Endothelial cell of umbilical vein (primary cell): ENCODE measurements at regions of chr3 and their contacts with region 1.

Region 1: GRCh38 chr3:44761424-44762169 is at the starts of genes KIAA1143 and KIF15:
- DNase-seq: peak; percentile 96
- H3K4me3 ChIP-seq: peak within 1 kb of the TSS; percentile 57 to 91 (median 81)
- H3K27ac ChIP-seq: peak within 1 kb of the TSS; percentile 80
- H3K4me1 ChIP-seq: peaks cover 6% of the 10 kb centered on the region
- H3K27me3 ChIP-seq: no peaks in the 10 kb centered on the region
- CTCF ChIP-seq: no peak
- POLR2A ChIP-seq: peak; percentile 74
- total RNA-seq, gene KIAA1143: 25.2 and 28.1 TPM in 2 replicates
- total RNA-seq, gene KIF15: 20.9 and 21.6 TPM in 2 replicates

Region 2: DNA sequence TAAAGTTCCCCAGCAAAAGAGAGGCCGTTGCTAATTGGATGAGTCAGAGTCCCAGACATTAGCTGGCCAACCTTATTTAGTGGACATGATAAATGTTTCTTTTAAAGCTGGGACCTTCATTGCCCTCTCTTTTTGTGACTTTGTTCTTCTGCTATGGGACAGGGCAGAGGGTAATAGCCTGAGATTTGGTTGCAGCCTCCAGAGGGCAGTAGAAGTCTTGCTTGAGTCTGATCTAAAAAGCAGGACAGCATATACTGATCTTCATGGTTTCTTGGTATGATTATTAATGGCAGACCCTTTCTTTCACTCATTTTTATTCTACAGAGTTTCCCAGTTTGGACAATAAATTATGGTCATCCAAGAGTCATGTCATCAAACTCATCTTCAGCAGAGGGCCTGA is 231.7 kb before region 1 on chr3:
- CTCF ChIA-PET with region 1: interaction called, 4 read pairs
- POLR2A ChIA-PET with region 1: no interaction called
- dilution Hi-C with region 1: no loop called
- intact Hi-C with region 1: loop called (anchors 1 kb)
- DNase-seq: peak; percentile 8
- H3K4me3 ChIP-seq: no peak overlapping the region
- H3K27ac ChIP-seq: no peak overlapping the region
- H3K4me1 ChIP-seq: no peaks in the 10 kb centered on the region
- H3K27me3 ChIP-seq: no peaks in the 10 kb centered on the region
- CTCF ChIP-seq: peak; percentile 21 to 23
- POLR2A ChIP-seq: no peak

Region 3: DNA sequence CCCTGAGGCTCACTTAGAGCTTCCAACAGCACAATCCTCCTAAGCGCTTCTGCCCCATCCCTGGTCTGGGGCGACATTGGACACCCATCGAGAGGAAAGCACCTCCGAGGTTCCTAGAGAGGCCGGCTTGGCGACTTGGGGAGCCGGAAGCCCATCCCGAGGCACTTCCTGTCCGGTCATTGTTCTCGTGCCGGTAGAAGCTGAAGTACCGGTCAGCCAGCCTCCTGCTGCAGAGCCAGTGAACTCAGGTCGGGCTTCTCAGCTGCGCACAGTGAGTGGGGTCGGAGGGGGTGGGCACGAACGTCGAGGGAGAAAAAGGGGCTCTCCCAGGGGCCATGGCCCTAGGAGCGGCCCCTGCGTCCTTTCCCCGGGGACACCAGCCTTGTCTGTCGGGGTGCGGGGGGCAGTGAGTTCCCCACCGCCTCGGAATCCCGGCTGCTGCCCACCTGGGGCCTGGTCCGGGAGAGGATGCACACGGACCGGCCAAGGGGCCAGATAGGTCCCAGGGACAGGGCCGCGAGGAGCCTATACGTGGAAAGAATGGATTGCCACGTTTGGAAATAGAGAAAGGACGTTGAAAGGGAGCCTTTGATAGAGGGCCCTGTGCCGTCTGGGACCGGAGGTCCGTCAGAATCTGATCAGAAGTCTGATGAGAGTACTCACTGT is 112.9 kb before region 1 on chr3 and contains the start of gene ZNF35:
- CTCF ChIA-PET with region 1: no interaction called
- POLR2A ChIA-PET with region 1: no interaction called
- dilution Hi-C with region 1: no loop called
- intact Hi-C with region 1: loop called (anchors 5 kb)
- DNase-seq: peak; percentile 84
- H3K4me3 ChIP-seq: peak within 1 kb of the TSS; percentile 83 to 97 (median 96)
- H3K27ac ChIP-seq: peak within 1 kb of the TSS; percentile 66
- H3K4me1 ChIP-seq: peaks cover 8% of the 10 kb centered on the region
- H3K27me3 ChIP-seq: no peaks in the 10 kb centered on the region
- CTCF ChIP-seq: no peak
- POLR2A ChIP-seq: peak; percentile 88
- total RNA-seq, gene ZNF35: 9.1 and 11.3 TPM in 2 replicates

Region 4: GRCh38 chr3:44712455-44713075 is 49.0 kb before region 1 on chr3 and contains the start of gene ZNF502:
- CTCF ChIA-PET with region 1: interaction called, 5 read pairs
- POLR2A ChIA-PET with region 1: interaction called, 3 read pairs
- dilution Hi-C with region 1: no loop called
- intact Hi-C with region 1: loop called (anchors 1 kb)
- DNase-seq: peak; percentile 85
- H3K4me3 ChIP-seq: peak within 1 kb of the TSS; percentile 76 to 98 (median 86)
- H3K27ac ChIP-seq: peak within 1 kb of the TSS; percentile 58
- H3K4me1 ChIP-seq: no peaks in the 10 kb centered on the region
- H3K27me3 ChIP-seq: no peaks in the 10 kb centered on the region
- CTCF ChIP-seq: peak; percentile 35 to 43
- POLR2A ChIP-seq: no peak
- total RNA-seq, gene ZNF502: 4.1 and 4.2 TPM in 2 replicates

Region 5: DNA sequence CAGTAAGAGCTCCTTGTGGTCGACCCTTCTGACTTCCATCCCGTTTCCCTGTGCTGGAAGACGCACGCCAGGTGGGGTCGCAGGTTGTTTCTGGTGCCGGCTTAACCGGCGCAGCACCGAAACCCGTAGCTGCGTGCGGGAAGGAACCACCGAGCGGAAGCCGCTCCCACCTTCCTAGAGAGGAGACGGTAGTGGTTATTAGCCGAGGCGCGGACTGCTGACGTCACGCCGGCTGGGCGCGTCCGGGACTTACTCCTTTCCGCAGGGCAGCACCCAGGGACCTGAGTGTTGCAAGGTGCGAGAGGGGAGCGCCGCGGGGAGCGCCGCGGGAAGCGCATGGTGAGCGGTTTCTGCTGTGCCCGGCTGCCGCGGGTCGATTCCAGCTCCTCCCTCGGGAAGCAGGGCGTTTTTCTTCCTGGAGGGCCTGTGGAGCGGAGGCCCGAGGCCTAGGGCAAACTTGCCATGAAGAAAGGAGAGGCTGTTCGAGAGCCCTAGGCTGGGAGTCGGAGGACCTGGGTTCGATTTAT is 32.1 kb before region 1 on chr3 and contains the start of gene ZNF501:
- CTCF ChIA-PET with region 1: interaction called, 6 read pairs
- POLR2A ChIA-PET with region 1: no interaction called
- dilution Hi-C with region 1: no loop called
- intact Hi-C with region 1: loop called (anchors 1 kb)
- DNase-seq: peak; percentile 83
- H3K4me3 ChIP-seq: peak within 1 kb of the TSS; percentile 67 to 82 (median 72)
- H3K27ac ChIP-seq: peak within 1 kb of the TSS; percentile 27
- H3K4me1 ChIP-seq: no peaks in the 10 kb centered on the region
- H3K27me3 ChIP-seq: no peaks in the 10 kb centered on the region
- CTCF ChIP-seq: no peak
- POLR2A ChIP-seq: peak; percentile 36
- total RNA-seq, gene ZNF501: 2.9 and 3.9 TPM in 2 replicates

Region 6: GRCh38 chr3:44883999-44884431 is 122.4 kb after region 1 on chr3:
- CTCF ChIA-PET with region 1: no interaction called
- POLR2A ChIA-PET with region 1: no interaction called
- dilution Hi-C with region 1: no loop called
- intact Hi-C with region 1: loop called (anchors 1 kb)
- DNase-seq: peak; percentile 90
- H3K4me3 ChIP-seq: no peak overlapping the region
- H3K27ac ChIP-seq: peak overlapping the region; percentile 91
- H3K4me1 ChIP-seq: peaks cover 38% of the 10 kb centered on the region
- H3K27me3 ChIP-seq: no peaks in the 10 kb centered on the region
- CTCF ChIP-seq: no peak
- POLR2A ChIP-seq: no peak